Activated CD4-positive, alpha-beta T cell treated with anti-CD3 and anti-CD28 coated beads, Interleukin-2, amount 10 ng/mL, durations not matched to agents 24 days and 14 days (primary cell): ENCODE measurements at regions of chr22 and their contacts with region 1.

Region 1: GRCh38 chr22:20418211-20418788 is 19.3 kb downstream of the SCARF2 start:
- DNase-seq: peak; percentile 92
- H3K4me3 Mint-ChIP-seq: peak overlapping the region; percentile 60
- H3K27ac Mint-ChIP-seq: no peak overlapping the region
- H3K4me1 Mint-ChIP-seq: peaks cover 1% of the 10 kb centered on the region
- H3K27me3 Mint-ChIP-seq: peaks cover 19% of the 10 kb centered on the region

Region 2: GRCh38 chr22:20456064-20456721 is 37.9 kb after region 1 on chr22:
- intact Hi-C with region 1: loop called (anchors 1 kb)
- DNase-seq: peak; percentile 92
- H3K4me3 Mint-ChIP-seq: no peak overlapping the region
- H3K27ac Mint-ChIP-seq: peak overlapping the region; percentile 68
- H3K4me1 Mint-ChIP-seq: peaks cover 15% of the 10 kb centered on the region
- H3K27me3 Mint-ChIP-seq: no peaks in the 10 kb centered on the region

Region 3: GRCh38 chr22:20568989-20569769 is 150.9 kb after region 1 on chr22:
- intact Hi-C with region 1: loop called (anchors 5 kb)
- DNase-seq: peak; percentile 93
- H3K4me3 Mint-ChIP-seq: peak overlapping the region; percentile 72
- H3K27ac Mint-ChIP-seq: peak overlapping the region; percentile 83
- H3K4me1 Mint-ChIP-seq: peaks cover 65% of the 10 kb centered on the region
- H3K27me3 Mint-ChIP-seq: no peaks in the 10 kb centered on the region